H1 (cell line): ENCODE measurements at regions of chr12 and their contacts with region 1.

Region 1: GRCh38 chr12:104108755-104109445 is 29.1 kb downstream of the NFYB start:
- DNase-seq: peak; percentile 43 to 91
- H3K4me3 ChIP-seq: no peak overlapping the region
- H3K27ac ChIP-seq: no peak overlapping the region
- H3K4me1 ChIP-seq: peaks cover 0 to 4% (median 0%) of the 10 kb centered on the region in 4 experiments; a peak in 2 of 7 replicates
- H3K27me3 ChIP-seq: no peaks in the 10 kb centered on the region
- CTCF ChIP-seq: peak; percentile 69 to 93 (median 74)
- EP300 ChIP-seq: no peak
- POLR2A ChIP-seq: no peak
- RAD21 ChIP-seq: peak; percentile 81 to 82

Region 2: DNA sequence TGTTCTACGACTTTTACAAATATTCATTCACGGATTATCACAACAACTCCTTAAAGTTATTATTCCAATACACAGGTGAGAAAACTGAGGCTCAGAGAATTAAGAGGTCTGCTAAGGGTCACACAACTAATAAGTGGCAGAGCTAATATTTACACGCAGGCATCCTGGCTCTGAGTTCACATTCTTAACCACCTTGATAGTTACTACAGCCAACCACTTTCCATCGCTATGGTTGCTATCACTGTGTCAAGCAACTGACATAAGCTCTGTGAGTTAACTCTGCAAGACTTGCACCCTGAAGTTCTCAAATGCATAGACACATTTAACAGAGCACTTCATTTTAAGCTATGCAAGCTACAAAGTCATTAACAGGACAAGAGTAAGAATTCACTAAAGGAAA is 62.6 kb before region 1 on chr12:
- CTCF ChIA-PET with region 1: interaction called, 13 read pairs
- POLR2A ChIA-PET with region 1: no interaction called
- DNase-seq: no peak
- H3K4me3 ChIP-seq: no peak overlapping the region
- H3K27ac ChIP-seq: no peak overlapping the region
- H3K4me1 ChIP-seq: peaks cover 0 to 3% (median 1%) of the 10 kb centered on the region in 4 experiments; a peak in 2 of 7 replicates
- H3K27me3 ChIP-seq: peaks cover 0 to 3% (median 0%) of the 10 kb centered on the region in 4 experiments; a peak in 2 of 7 replicates
- CTCF ChIP-seq: no peak
- EP300 ChIP-seq: no peak
- POLR2A ChIP-seq: no peak
- RAD21 ChIP-seq: no peak

Region 3: DNA sequence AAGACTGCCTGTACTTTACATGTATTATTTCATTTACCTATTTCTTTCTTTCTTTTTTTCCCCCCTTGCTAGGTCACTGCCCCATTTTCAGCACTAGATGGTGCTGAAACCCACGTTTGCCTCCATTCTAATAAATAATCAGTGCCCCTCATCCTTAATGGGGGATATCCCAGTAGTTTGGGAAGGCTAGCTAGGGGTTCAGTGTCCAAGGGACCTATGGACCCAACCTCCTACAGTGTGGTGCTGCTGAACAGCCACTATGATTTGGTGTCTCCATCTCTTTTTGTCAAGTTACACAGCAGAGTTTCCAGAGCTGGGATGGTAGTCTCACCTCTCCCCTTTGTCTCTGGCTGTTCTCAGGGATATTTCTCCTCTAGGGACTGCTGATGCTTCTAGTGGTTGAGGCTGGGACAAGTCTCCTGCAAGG is 51.1 kb before region 1 on chr12:
- CTCF ChIA-PET with region 1: interaction called, 94 read pairs
- POLR2A ChIA-PET with region 1: interaction called, 4 read pairs
- DNase-seq: peak in 1 of 2 experiments; percentile 54
- H3K4me3 ChIP-seq: no peak overlapping the region
- H3K27ac ChIP-seq: no peak overlapping the region
- H3K4me1 ChIP-seq: peaks cover 0 to 12% (median 6%) of the 10 kb centered on the region in 4 experiments; a peak in 3 of 7 replicates
- H3K27me3 ChIP-seq: no peaks in the 10 kb centered on the region; a peak in 1 of 7 replicates
- CTCF ChIP-seq: peak in 2 of 3 experiments; percentile 69 to 75; a peak in 3 of 4 replicates
- EP300 ChIP-seq: no peak
- POLR2A ChIP-seq: no peak
- RAD21 ChIP-seq: peak; percentile 85 to 86

Region 4: GRCh38 chr12:104083769-104084475 is 25.0 kb before region 1 on chr12:
- CTCF ChIA-PET with region 1: interaction called, 15 read pairs
- POLR2A ChIA-PET with region 1: no interaction called
- DNase-seq: no peak
- H3K4me3 ChIP-seq: no peak overlapping the region
- H3K27ac ChIP-seq: no peak overlapping the region
- H3K4me1 ChIP-seq: no peaks in the 10 kb centered on the region
- H3K27me3 ChIP-seq: no peaks in the 10 kb centered on the region
- CTCF ChIP-seq: no peak
- EP300 ChIP-seq: no peak
- POLR2A ChIP-seq: no peak
- RAD21 ChIP-seq: no peak

Region 5: GRCh38 chr12:104090687-104091086 is 18.2 kb before region 1 on chr12:
- CTCF ChIA-PET with region 1: interaction called, 15 read pairs
- POLR2A ChIA-PET with region 1: no interaction called
- DNase-seq: no peak
- H3K4me3 ChIP-seq: no peak overlapping the region
- H3K27ac ChIP-seq: no peak overlapping the region
- H3K4me1 ChIP-seq: no peaks in the 10 kb centered on the region
- H3K27me3 ChIP-seq: peaks cover 0 to 1% (median 0%) of the 10 kb centered on the region in 4 experiments; a peak in 1 of 7 replicates
- CTCF ChIP-seq: no peak
- EP300 ChIP-seq: no peak
- POLR2A ChIP-seq: no peak
- RAD21 ChIP-seq: no peak

Region 6: DNA sequence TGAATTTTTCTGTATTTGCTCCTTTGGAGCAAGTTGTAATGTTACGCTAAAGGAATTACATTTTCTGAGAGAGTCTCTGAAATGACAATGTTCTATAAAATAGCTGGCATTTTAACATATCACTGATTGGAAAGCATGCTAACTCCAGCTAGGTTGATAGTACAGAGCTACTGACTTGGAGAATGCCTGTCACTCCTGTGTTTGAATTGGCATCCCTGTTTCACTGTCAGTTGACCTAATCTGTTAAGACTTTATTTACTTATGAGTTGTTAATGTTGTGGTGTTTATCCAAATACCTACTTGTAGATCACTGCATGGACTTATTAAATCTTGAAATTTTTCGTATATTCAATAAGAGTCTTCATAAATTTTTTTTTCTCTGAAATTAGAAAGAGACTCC is 10.9 kb before region 1 on chr12:
- CTCF ChIA-PET with region 1: interaction called, 27 read pairs
- POLR2A ChIA-PET with region 1: no interaction called
- DNase-seq: no peak
- H3K4me3 ChIP-seq: no peak overlapping the region
- H3K27ac ChIP-seq: no peak overlapping the region
- H3K4me1 ChIP-seq: no peaks in the 10 kb centered on the region
- H3K27me3 ChIP-seq: peaks cover 0 to 1% (median 0%) of the 10 kb centered on the region in 4 experiments; a peak in 1 of 7 replicates
- CTCF ChIP-seq: no peak
- EP300 ChIP-seq: no peak
- POLR2A ChIP-seq: no peak
- RAD21 ChIP-seq: no peak

Region 7: GRCh38 chr12:104121001-104121400 is 12.1 kb after region 1 on chr12:
- CTCF ChIA-PET with region 1: interaction called, 17 read pairs
- POLR2A ChIA-PET with region 1: interaction called, 3 read pairs
- DNase-seq: no peak
- H3K4me3 ChIP-seq: no peak overlapping the region
- H3K27ac ChIP-seq: no peak overlapping the region
- H3K4me1 ChIP-seq: peaks cover 0 to 6% (median 0%) of the 10 kb centered on the region in 4 experiments; a peak in 2 of 7 replicates
- H3K27me3 ChIP-seq: no peaks in the 10 kb centered on the region
- CTCF ChIP-seq: no peak
- EP300 ChIP-seq: no peak
- POLR2A ChIP-seq: no peak
- RAD21 ChIP-seq: no peak

Region 8: GRCh38 chr12:104189915-104190555 is 81.1 kb after region 1 on chr12:
- CTCF ChIA-PET with region 1: no interaction called
- POLR2A ChIA-PET with region 1: no interaction called
- DNase-seq: no peak
- H3K4me3 ChIP-seq: no peak overlapping the region
- H3K27ac ChIP-seq: no peak overlapping the region
- H3K4me1 ChIP-seq: no peaks in the 10 kb centered on the region
- H3K27me3 ChIP-seq: no peaks in the 10 kb centered on the region; a peak in 1 of 7 replicates
- CTCF ChIP-seq: no peak
- EP300 ChIP-seq: no peak
- POLR2A ChIP-seq: no peak
- RAD21 ChIP-seq: no peak

Region 9: GRCh38 chr12:104219908-104220530 is 111.1 kb after region 1 on chr12:
- CTCF ChIA-PET with region 1: no interaction called
- POLR2A ChIA-PET with region 1: no interaction called
- DNase-seq: peak in 1 of 2 experiments; percentile 23
- H3K4me3 ChIP-seq: no peak overlapping the region
- H3K27ac ChIP-seq: no peak overlapping the region
- H3K4me1 ChIP-seq: no peaks in the 10 kb centered on the region
- H3K27me3 ChIP-seq: peaks cover 0 to 12% (median 10%) of the 10 kb centered on the region in 4 experiments; a peak in 6 of 7 replicates
- CTCF ChIP-seq: no peak
- EP300 ChIP-seq: no peak
- POLR2A ChIP-seq: no peak
- RAD21 ChIP-seq: no peak